ENCODE measurements at regions of chr5 and their contacts with region 1.

Region 1: DNA sequence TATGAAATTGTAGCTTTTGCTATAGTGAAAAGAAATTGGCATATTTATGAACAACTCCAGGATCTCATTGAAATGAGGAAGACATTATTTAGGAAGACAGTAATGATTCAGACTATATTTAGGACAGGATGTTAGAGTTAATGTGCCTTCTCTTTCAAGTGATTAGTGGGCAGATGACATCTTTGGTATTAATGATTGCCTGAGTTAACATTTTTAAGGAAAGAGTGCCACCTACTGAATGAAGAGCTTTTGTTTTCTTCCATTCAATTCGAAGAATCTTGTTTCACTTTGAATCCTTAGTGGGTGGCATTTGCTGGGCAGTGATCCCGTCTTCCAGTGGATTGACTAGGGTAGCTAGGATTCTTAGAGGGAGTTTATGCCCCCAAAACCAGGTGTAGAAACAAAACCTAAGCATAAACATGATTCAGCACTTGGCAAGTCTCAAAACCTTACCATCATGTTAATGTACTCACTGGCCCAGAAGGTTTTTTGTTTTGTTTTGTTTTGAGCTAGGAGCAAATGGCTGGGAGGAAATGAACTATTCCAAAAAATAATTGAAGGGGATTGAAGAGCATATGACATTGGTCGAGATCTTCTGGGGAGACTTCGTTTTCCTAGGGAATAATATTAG is 23.2 kb downstream of the MAP3K1 start:
- DNase-seq: no peak
- H3K4me3 ChIP-seq: peak overlapping the region in 25 of 59 donors; percentile 3 to 47 (median 27)
- H3K27ac ChIP-seq: peak overlapping the region in 13 of 59 donors; percentile 3 to 63 (median 20)
- H3K27me3 ChIP-seq: no peaks in the 10 kb centered on the region
- CTCF ChIP-seq: peak; percentile 52 to 91 (median 73)

Region 2: GRCh38 chr5:56270568-56271392 is 567.7 kb before region 1 on chr5:
- intact Hi-C with region 1: loop called (anchors 1 to 2 kb)
- DNase-seq: peak; percentile 66 to 85 (median 80)
- H3K4me3 ChIP-seq: no peak overlapping the region
- H3K27ac ChIP-seq: no peak overlapping the region
- H3K27me3 ChIP-seq: no peaks in the 10 kb centered on the region
- CTCF ChIP-seq: peak; percentile 74 to 99 (median 96)